ENCODE measurements at regions of chr10 and their contacts with region 1.

Region 1: GRCh38 chr10:11225935-11226334 is 208.3 kb downstream of the CELF2 start:
- DNase-seq: peak in 7 of 9 experiments; percentile 37 to 88 (median 61)
- ATAC-seq: peak; percentile 69
- H3K4me3 ChIP-seq: peak overlapping the region in 1 of 2 experiments; percentile 13
- H3K4me3 Mint-ChIP-seq: peak overlapping the region; percentile 69
- H3K27ac ChIP-seq: peak overlapping the region; percentile 41 to 78
- H3K27ac Mint-ChIP-seq: peak overlapping the region; percentile 98
- H3K4me1 ChIP-seq: peaks cover 75% of the 10 kb centered on the region
- H3K4me1 Mint-ChIP-seq: peaks cover 93% of the 10 kb centered on the region
- H3K27me3 ChIP-seq: no peaks in the 10 kb centered on the region
- H3K27me3 Mint-ChIP-seq: no peaks in the 10 kb centered on the region
- CTCF ChIP-seq: no peak

Region 2: GRCh38 chr10:11209830-11210181 is 16.1 kb before region 1 on chr10:
- CTCF ChIA-PET with region 1: interaction called, 4 read pairs
- POLR2A ChIA-PET with region 1: interaction called, 12 read pairs
- intact Hi-C with region 1: loop called in 1 of 2 experiments (anchors 2 kb)
- DNase-seq: peak in 3 of 9 experiments; percentile 30 to 63 (median 32)
- ATAC-seq: no peak
- H3K4me3 ChIP-seq: peak overlapping the region in 1 of 2 experiments; percentile 18
- H3K4me3 Mint-ChIP-seq: peak overlapping the region; percentile 77
- H3K27ac ChIP-seq: peak overlapping the region; percentile 7 to 64
- H3K27ac Mint-ChIP-seq: peak overlapping the region; percentile 93
- H3K4me1 ChIP-seq: peaks cover 99% of the 10 kb centered on the region
- H3K4me1 Mint-ChIP-seq: peaks cover 96% of the 10 kb centered on the region
- H3K27me3 ChIP-seq: no peaks in the 10 kb centered on the region
- H3K27me3 Mint-ChIP-seq: no peaks in the 10 kb centered on the region
- CTCF ChIP-seq: no peak

Region 3: DNA sequence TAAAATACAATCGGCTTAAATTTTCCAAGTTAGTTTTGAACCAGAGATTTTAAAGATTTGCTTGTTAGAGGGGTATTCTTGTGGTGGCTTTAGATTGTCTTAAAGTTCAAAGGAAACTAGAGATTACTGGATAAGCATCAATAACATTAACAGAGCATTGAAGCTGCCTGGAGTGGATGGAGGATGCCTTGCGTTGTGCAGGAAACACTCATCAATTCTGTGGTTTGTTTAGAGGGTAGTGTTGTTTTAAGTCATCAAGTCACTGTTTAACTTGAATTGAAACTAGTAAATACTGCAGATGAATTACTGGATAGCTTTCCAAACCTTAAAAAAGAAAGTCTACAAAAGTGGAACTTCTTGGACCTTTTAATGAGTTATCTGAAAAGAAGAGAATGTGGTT is 10.3 kb after region 1 on chr10:
- CTCF ChIA-PET with region 1: interaction called, 5 read pairs
- POLR2A ChIA-PET with region 1: interaction called, 28 read pairs
- intact Hi-C with region 1: loop called in 1 of 2 experiments (anchors 2 kb)
- DNase-seq: peak in 3 of 9 experiments; percentile 47 to 70 (median 48)
- ATAC-seq: peak; percentile 62
- H3K4me3 ChIP-seq: no peak overlapping the region
- H3K4me3 Mint-ChIP-seq: peak overlapping the region; percentile 42
- H3K27ac ChIP-seq: peak overlapping the region; percentile 14 to 67
- H3K27ac Mint-ChIP-seq: peak overlapping the region; percentile 91
- H3K4me1 ChIP-seq: peaks cover 78% of the 10 kb centered on the region
- H3K4me1 Mint-ChIP-seq: peaks cover 96% of the 10 kb centered on the region
- H3K27me3 ChIP-seq: no peaks in the 10 kb centered on the region
- H3K27me3 Mint-ChIP-seq: no peaks in the 10 kb centered on the region
- CTCF ChIP-seq: no peak

Region 4: GRCh38 chr10:11260170-11260569 is 34.2 kb after region 1 on chr10:
- CTCF ChIA-PET with region 1: no interaction called
- POLR2A ChIA-PET with region 1: no interaction called
- intact Hi-C with region 1: loop called in 1 of 2 experiments (anchors 5 kb)
- DNase-seq: no peak
- ATAC-seq: no peak
- H3K4me3 ChIP-seq: no peak overlapping the region
- H3K4me3 Mint-ChIP-seq: no peak overlapping the region
- H3K27ac ChIP-seq: no peak overlapping the region
- H3K27ac Mint-ChIP-seq: peak overlapping the region; percentile 71
- H3K4me1 ChIP-seq: peaks cover 44% of the 10 kb centered on the region
- H3K4me1 Mint-ChIP-seq: peaks cover 84% of the 10 kb centered on the region
- H3K27me3 ChIP-seq: no peaks in the 10 kb centered on the region
- H3K27me3 Mint-ChIP-seq: no peaks in the 10 kb centered on the region
- CTCF ChIP-seq: no peak

Region 5: DNA sequence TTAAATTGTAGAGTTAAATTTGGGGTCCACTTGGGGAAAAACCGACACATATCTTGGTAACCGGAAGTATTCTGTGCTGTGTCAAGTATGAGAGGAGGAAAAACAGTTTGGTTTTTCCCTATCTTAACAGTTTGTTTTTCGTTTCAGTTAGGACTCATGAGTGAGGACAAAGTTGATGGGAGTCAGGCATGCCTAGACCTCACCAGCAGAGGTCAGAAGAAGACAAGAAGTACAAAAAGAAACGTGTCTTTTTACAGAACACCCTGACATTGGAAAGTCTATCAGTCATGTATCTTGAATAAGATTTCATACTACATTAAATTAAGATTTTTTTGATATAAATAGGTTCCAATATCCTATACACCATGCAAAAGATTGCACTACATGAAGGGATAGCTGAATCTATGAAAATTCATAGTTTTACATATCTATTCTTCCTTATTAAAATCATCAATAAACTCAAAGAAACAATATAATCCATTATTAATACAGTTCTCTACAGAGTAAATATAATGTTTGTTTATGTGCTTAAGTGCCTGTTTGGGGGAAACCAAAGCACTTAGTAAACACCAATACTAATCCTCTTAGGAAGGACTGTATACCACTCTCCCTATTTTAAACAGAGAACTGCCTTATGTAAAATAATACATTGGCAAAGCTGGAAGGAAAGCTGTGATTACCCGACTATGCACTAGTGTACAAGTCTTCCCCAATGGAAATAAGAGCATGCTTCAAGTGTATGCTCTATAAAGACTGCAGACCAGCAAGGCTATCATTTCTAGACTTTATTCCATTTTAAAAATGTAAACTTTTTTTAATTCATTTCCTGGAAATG is 289.9 kb after region 1 on chr10:
- CTCF ChIA-PET with region 1: no interaction called
- POLR2A ChIA-PET with region 1: no interaction called
- intact Hi-C with region 1: no loop called
- DNase-seq: peak in 7 of 9 experiments; percentile 3 to 77 (median 45)
- ATAC-seq: peak; percentile 85
- H3K4me3 ChIP-seq: no peak overlapping the region
- H3K4me3 Mint-ChIP-seq: no peak overlapping the region
- H3K27ac ChIP-seq: no peak overlapping the region
- H3K27ac Mint-ChIP-seq: no peak overlapping the region
- H3K4me1 ChIP-seq: peaks cover 6% of the 10 kb centered on the region
- H3K4me1 Mint-ChIP-seq: peaks cover 4% of the 10 kb centered on the region
- H3K27me3 ChIP-seq: no peaks in the 10 kb centered on the region
- H3K27me3 Mint-ChIP-seq: no peaks in the 10 kb centered on the region
- CTCF ChIP-seq: peak; percentile 67

Measured in CD8-positive, alpha-beta T cell (primary cell).